ENCODE measurements at regions of chr10 and their contacts with region 1.

Region 1: DNA sequence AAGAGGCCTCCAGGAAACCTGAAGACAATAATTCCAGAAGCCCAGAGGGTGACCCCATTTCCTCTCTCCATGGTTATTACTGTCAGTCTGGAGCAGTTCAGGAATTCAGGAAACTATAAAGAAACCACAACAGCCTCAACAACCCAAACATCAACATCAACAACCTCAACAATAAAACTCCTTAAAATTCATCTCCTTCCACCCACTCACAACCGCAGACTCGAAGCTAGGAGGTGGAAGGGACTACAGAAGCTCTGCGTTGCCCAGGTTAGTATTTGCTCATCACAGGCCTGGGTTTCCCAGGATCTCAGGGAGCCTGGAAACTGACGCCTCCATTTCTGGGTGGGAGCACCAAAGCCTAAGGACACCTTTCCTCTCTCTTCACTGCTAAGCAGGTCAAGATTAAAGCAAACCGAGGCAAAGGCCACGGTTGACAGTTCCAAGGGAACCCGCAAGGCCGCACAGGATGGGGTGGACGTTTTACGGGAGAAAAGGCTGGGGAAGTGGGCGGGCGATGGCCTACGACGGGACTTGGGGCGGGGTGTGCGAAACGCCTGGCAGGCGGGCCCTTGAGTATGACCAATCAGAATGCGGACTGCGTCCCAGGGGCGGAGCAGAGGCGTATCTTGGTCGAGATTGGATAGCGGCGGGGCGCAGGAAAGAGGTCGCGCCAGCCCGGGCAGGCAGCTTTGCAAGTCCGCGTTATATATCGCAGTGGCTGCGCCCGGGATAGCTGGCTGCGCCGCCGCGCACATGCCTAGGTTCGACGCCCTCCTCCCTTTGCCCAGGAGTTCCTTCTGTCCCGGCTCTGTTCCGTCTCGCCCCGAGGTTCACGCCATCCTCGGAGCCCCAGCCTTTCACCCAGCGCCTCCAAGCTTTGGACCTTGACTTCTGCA is at the start of gene ELOVL3:
- DNase-seq: peak; percentile 96
- ATAC-seq: peak; percentile 96
- total RNA-seq, gene ELOVL3: not detected

Region 2: DNA sequence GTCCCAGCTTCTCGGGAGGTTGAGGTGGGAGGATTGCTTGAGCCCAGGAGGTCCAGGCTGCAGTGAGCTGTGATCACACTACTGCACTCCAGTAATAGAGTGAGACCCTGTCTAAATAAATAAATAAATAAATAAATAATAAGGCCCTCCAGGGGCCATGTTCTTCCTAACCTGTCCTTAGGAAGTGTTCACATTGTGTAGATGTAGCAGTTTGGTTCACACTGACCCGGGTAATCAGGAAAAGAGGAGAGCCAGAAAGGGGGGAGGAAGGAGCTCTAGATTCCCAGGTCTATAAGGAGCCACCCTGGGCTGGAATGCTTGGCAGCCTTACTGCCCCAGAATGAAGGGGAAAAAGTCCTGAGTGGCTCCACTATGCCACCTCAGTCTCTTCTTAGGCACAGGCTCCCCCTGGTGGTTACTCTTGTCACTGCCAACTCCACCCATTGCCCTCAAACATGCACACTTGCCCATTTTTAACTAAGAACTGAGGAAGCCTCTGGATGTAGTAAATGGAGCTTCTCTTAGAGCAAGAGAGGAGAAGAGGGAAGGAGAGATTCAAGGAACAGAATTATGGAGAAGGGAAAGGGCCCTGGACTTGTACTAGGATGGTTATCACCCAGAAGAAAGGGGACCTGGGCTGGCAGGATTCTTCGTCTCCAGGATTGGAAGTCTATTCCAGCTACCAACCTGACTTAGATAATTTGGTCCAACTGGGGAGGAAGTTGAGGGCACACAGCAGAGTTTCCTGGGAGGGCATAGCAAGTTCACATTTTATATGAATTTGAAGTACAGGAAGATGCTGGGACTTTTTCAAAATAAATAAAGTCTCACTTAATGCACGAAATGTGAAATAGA is 153.0 kb before region 1 on chr10:
- intact Hi-C with region 1: no loop called
- DNase-seq: peak; percentile 80
- ATAC-seq: peak; percentile 85

Region 3: GRCh38 chr10:102352066-102352715 is 126.3 kb after region 1 on chr10:
- intact Hi-C with region 1: loop called (anchors 5 kb)
- DNase-seq: peak; percentile 47
- ATAC-seq: peak; percentile 56

Region 4: GRCh38 chr10:102368072-102368471 is 142.2 kb after region 1 on chr10:
- intact Hi-C with region 1: no loop called
- DNase-seq: no peak
- ATAC-seq: no peak

Region 5: GRCh38 chr10:102450194-102450938 is 224.5 kb after region 1 on chr10:
- intact Hi-C with region 1: no loop called
- DNase-seq: peak; percentile 93
- ATAC-seq: peak; percentile 94

Region 6: GRCh38 chr10:103204353-103205255 is 978.7 kb after region 1 on chr10:
- intact Hi-C with region 1: no loop called
- DNase-seq: no peak
- ATAC-seq: no peak

Measured in left ventricle myocardium superior (tissue), 1 donor.